Adrenal gland (tissue), 19 donors: ENCODE measurements at regions of chr19 and their contacts with region 1.

Region 1: DNA sequence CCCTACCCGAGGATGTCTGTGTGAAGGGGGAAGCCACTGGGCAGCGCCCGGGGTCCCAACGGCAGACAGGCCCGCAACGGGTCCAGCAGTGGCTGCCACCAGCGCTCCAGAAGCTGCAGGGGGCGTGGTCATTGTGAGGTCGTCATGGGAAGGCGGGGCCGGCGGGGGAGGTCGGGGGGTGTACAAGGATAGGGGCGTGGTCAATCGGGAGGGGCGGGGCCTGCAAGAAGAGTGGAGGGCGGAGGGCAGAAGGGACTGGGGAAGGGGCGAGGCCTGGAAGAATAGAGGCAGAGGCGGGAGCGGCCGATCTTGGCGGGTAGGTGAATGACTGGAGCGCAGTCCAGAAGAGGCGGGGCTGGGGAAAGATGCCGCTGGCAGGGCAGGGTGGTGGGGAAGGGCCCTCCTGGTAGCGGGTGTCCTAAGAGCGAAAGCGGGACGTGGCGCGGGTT is 4.4 kb downstream of the FUZ start:
- DNase-seq: peak; percentile 97 to 99 (median 98)
- H3K4me3 ChIP-seq: peak overlapping the region; percentile 12 to 77 (median 58)
- H3K27ac ChIP-seq: peak overlapping the region; percentile 70 to 94 (median 93)
- H3K4me1 ChIP-seq: peaks cover 11 to 25% of the 10 kb centered on the region in 2 donors
- H3K27me3 ChIP-seq: no peaks in the 10 kb centered on the region
- CTCF ChIP-seq: no peak
- POLR2A ChIP-seq: peak in 1 of 2 donors; percentile 83

Region 2: DNA sequence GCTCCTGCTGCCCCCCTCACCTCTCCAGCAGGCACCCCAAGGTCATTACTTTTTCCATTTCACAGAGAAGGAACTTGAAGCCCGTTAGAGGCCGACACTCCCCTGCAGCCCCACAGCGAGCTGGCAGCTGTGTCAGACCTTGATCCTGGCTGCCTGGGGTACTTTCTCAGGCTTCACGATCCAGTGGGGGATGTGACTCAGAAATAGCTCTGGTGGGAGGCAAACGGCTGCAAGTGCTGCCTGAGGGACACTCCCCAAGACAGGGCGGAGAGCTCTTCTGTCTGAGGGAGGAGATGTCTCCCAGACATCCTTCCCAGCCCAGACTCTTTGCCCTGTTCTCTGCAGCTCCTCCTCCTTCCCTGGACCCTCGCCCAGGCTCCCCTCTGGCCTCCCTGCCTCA is 50.4 kb before region 1 on chr19:
- intact Hi-C with region 1: loop called in 1 of 2 experiments (anchors 10 kb)
- DNase-seq: peak in 4 of 7 donors; percentile 45 to 69 (median 58)
- H3K4me3 ChIP-seq: no peak overlapping the region
- H3K27ac ChIP-seq: peak overlapping the region in 2 of 5 donors; percentile 36 to 45
- H3K4me1 ChIP-seq: peaks cover 7 to 8% of the 10 kb centered on the region in 2 donors
- H3K27me3 ChIP-seq: no peaks in the 10 kb centered on the region
- CTCF ChIP-seq: no peak
- POLR2A ChIP-seq: no peak

Region 3: DNA sequence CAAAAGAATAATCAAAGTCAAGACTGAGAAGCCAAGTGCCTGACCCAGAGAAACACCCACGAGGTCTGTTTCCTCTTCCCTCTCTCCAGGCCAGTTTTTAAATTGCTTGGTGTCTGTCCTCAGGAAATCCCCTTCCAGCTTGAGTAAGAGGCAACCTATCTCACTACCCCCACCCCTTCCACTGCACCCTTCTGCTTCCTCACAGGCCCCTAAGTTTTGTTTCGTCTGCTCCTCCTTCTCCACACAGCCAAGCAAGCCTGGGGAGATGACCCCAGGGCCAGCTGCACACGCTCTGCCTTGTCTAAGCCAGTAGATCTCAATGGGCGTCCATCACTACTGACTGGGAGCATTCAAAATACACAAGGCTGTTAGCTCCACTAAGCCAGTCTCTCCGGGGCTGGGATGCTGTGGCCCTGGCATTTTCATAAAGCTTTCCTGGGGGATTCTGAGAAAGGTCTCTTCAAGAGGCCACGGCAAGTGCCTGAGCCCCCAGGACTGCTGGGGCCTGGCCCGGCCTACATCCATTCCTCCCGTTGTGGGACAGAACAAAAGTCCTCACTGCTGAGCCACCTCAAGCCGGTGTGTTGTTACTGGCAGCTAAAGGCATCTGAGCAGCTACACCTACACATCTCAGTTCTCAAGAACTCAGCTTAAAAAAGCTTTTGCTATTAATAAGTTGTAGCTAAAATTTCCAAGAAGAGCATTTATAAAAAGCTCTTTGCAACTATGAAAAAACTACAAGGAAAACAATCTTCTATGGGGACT is 102.8 kb after region 1 on chr19:
- intact Hi-C with region 1: no loop called
- DNase-seq: no peak
- H3K4me3 ChIP-seq: no peak overlapping the region
- H3K27ac ChIP-seq: peak overlapping the region in 2 of 5 donors; percentile 29 to 34
- H3K4me1 ChIP-seq: peaks cover 0 to 10% of the 10 kb centered on the region in 2 donors
- H3K27me3 ChIP-seq: no peaks in the 10 kb centered on the region
- CTCF ChIP-seq: no peak
- POLR2A ChIP-seq: no peak